ENCODE measurements at regions of chr6 and their contacts with region 1.

Region 1: DNA sequence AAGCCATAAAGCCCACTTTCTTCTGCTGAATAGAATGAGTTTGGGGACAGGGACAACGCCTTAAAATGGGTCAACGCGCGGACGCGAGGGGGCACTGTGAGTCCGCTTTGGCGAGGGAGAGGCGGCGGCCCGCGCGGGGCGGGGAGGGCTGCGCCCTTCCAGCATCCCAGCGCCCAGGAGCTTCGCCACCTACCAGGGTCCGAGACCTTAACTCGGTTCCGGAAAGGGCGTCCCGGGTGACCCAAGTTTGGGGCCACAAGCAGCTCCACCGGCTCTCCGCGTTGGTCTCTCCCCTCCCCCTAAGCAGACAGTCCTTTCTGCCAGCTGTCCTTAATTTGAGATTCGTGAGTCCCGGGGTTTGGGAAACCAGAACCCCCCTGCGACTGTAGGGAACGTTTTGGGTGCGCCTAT is 1.8 kb upstream of the SAMD5 start:
- DNase-seq: peak; percentile 87
- ATAC-seq: peak; percentile 75
- H3K4me3 ChIP-seq: peak overlapping the region; percentile 75
- H3K27ac ChIP-seq: no peak overlapping the region
- H3K4me1 ChIP-seq: peaks cover 19% of the 10 kb centered on the region
- H3K27me3 ChIP-seq: peaks cover 14% of the 10 kb centered on the region
- CTCF ChIP-seq: peak; percentile 79

Region 2: GRCh38 chr6:147366290-147366689 is 140.4 kb before region 1 on chr6:
- intact Hi-C with region 1: no loop called
- DNase-seq: no peak
- ATAC-seq: no peak
- H3K4me3 ChIP-seq: no peak overlapping the region
- H3K27ac ChIP-seq: no peak overlapping the region
- H3K4me1 ChIP-seq: no peaks in the 10 kb centered on the region
- H3K27me3 ChIP-seq: no peaks in the 10 kb centered on the region
- CTCF ChIP-seq: no peak

Region 3: DNA sequence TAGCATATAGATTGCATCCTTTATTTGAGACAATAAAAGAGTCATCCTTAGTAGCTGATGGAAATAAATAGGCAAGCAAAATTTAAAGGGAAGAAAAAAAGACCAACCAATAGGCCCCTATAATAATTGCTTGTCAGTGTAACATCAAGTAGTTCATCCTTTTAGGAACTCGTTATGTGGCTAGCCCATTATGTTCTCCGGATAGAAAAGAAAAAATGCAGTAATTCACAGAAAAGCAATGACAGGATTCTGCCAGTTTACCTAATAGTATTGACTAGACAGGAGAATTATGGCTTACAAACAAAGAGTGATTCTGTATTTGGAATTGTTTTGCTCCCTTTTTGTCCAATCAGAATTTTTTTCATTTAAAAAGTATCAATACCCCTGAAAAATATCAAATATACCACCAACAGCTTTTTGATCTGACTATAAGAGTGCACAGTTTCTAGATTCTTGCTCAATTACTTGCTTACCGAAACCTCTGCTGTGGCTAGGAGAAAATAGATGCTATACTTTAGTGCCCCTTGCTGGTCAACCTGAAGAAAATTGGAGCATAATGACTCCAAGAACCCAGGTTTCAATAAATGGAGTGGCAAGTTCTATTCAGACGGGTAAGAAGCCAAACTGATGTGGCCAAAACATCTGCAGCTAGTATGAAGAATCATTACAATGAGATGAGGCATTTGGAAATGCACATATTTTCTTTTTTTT is 744.4 kb after region 1 on chr6:
- intact Hi-C with region 1: loop called (anchors 10 kb)
- DNase-seq: no peak
- ATAC-seq: peak; percentile 81
- H3K4me3 ChIP-seq: no peak overlapping the region
- H3K27ac ChIP-seq: no peak overlapping the region
- H3K4me1 ChIP-seq: no peaks in the 10 kb centered on the region
- H3K27me3 ChIP-seq: no peaks in the 10 kb centered on the region
- CTCF ChIP-seq: peak; percentile 50